Cardiac septum (tissue), 1 donor: ENCODE measurements at regions of chr3 and their contacts with region 1.

Region 1: GRCh38 chr3:184874709-184875644 is 63.0 kb downstream of the VPS8 start:
- DNase-seq: no peak

Region 2: DNA sequence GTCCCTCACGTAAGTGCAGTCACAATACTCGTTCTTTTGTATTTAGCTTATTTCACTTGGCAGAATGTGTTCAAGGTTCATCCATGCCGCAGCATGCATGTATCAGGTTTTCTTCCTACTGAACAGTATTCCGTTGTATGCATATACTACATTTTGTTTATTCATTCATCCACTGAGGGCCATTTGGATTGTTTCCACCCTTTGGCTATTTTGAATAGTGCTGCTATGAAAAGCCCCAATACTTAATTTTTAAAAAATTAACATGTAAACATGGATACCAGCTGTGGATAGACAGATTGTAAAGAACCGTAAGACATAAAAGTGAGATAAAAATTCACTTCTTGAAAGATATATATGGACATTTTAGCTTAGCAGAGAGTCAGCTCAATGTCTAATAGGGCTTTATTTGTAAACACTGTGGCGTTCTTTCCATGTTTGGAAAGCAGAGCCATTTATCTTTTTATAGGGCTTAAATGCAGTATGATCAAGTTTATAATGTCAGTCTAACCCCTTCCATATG is 52.9 kb after region 1 on chr3:
- intact Hi-C with region 1: no loop called
- DNase-seq: no peak

Region 3: DNA sequence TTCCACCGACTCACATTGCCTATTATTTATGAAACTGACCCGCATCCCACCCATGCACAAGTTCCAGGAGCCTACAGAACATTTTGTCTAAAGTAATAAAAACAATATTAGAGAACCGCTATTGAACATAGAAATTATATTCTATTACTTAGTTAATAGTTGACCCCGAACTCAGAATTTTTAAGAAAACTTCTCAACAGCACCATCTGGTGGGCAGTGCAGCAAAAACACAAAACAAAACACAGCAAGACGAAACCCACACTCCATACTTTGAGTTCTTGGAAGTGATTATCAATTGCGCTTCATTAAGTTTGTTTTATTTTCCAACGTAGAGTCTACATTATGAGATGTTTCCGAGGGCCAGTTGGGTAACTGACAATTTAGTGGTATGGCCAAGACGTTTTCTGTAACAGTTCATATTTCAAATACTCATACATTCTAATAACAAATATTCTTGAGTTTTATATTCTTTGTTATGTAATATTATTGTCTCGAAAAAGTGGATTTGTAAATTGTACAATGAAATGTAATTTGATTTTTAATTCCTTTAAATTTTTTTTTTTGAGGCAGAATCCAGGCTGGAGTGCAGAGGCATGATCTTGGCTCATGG is 301.9 kb after region 1 on chr3:
- intact Hi-C with region 1: loop called (anchors 2 kb)
- DNase-seq: no peak